ENCODE measurements at regions of chr17 and their contacts with region 1.

Region 1: GRCh38 chr17:64920026-64920418 is 744 bp upstream of the LRRC37A3 start:
- DNase-seq: no peak

Region 2: GRCh38 chr17:65198653-65199382 is 278.8 kb after region 1 on chr17:
- intact Hi-C with region 1: loop called (anchors 5 kb)
- DNase-seq: no peak

Measured in cardiac septum (tissue), 1 donor.